ENCODE measurements at regions of chr6 and their contacts with region 1.

Region 1: GRCh38 chr6:109440331-109441068 is at the starts of genes PPIL6 and SMPD2:
- DNase-seq: peak; percentile 95
- total RNA-seq, gene PPIL6: 1.2 TPM
- total RNA-seq, gene SMPD2: 5.1 TPM

Region 2: GRCh38 chr6:109482905-109483735 is 42.6 kb after region 1 on chr6 and contains the start of gene ZBTB24:
- intact Hi-C with region 1: loop called (anchors 5 kb)
- DNase-seq: peak; percentile 95
- total RNA-seq, gene ZBTB24: 3.0 TPM

Region 3: GRCh38 chr6:109523478-109523877 is 83.0 kb after region 1 on chr6:
- intact Hi-C with region 1: no loop called
- DNase-seq: no peak

Measured in cardiac septum (tissue), 1 donor.